ENCODE measurements at regions of chr16 and their contacts with region 1.

Region 1: GRCh38 chr16:22001591-22001990 is 675 bp upstream of the PDZD9 start:
- DNase-seq: no peak
- ATAC-seq: peak; percentile 53
- H3K4me3 ChIP-seq: no peak overlapping the region
- H3K27ac ChIP-seq: no peak overlapping the region
- H3K4me1 ChIP-seq: peaks cover 7% of the 10 kb centered on the region
- H3K27me3 ChIP-seq: no peaks in the 10 kb centered on the region
- CTCF ChIP-seq: no peak
- POLR2A ChIP-seq: no peak

Region 2: DNA sequence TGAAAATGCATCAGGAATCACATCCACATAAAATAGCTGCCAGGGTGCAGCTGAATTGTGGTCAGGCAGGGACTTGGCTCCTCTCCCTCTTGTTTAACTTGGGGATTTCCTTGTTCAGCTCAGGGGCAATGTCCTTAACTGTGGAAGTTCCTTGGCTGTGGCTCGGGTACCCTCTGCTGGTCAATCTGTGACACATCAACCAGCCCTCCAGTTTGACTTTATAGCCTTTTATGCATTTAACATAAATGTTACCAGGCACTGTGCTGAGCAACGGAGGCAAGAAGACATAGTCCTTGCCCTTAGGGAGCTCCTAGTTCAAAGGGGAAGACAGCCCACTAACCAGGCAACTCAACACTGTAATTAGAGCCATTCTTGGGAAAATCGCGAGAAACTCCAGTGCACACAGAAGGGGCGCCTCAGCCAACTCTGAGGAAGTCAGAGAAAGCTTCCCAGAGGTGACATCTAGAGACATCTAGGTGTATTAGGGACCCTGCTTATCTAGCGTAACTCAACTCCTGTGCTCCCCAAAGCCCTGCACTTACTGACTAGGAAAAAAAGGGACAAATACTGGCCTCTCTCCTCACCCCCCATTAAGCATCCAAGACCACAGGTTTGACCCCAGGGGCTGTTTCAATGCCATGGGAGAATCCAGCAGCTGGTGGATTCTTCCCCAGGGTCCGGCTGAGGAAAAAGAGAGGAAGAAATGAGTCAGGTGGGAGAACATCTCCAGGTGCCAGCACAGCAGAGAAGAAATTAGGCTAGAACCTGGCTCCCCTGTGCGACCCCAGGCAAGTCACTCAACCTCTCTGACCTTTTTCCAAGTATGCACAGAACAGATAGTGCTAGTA is 187.2 kb after region 1 on chr16:
- intact Hi-C with region 1: loop called (anchors 5 kb)
- DNase-seq: peak; percentile 76 to 91 (median 82)
- ATAC-seq: peak; percentile 16
- H3K4me3 ChIP-seq: no peak overlapping the region
- H3K27ac ChIP-seq: peak overlapping the region; percentile 17 to 98 (median 90)
- H3K4me1 ChIP-seq: peaks cover 32% of the 10 kb centered on the region
- H3K27me3 ChIP-seq: no peaks in the 10 kb centered on the region
- CTCF ChIP-seq: peak; percentile 74 to 96 (median 91)
- POLR2A ChIP-seq: no peak

Region 3: DNA sequence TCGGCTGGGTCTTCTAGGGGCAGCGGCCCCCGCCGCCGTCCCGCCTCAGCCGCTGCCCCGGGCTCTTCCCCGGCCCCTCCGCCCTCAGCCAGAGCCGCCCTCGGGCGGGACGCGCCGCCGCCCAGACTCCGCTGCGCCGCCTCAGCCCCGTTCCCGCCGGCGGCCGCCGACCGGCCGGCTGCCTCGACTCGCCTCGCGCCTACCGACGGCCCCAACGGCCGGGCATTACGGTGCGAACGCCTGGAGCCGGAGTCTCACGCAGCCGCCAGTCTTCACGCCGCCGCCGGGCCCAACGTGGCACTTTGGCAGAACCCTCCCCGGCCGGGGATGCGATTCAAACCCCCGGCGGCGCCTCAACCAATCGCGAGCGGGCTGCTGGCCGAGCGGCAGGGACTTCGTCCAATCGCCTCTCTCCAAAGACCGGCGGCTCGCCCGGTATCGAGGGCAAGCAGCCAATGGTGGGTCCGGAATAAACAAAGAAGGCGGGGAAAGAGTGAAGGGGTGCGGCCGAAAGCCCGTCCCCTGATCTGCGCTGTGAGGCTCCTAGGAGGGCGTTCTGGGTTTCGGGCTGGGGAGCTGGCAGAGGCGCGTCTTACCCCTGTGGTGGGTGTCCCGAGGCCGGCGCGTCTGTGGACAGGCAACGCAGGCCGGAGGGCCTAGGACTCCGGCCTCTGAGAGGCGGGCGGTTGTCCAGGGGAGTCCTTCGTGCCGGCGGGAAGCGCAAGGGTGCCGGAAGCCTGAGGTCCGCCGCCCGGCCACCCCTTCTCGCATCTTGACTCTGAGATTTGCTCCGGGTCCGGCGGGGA is 372.9 kb after region 1 on chr16 and contains the start of gene CDR2:
- intact Hi-C with region 1: no loop called
- DNase-seq: peak; percentile 98 to 99 (median 98)
- ATAC-seq: peak; percentile 96
- H3K4me3 ChIP-seq: peak within 1 kb of the TSS; percentile 60 to 92
- H3K27ac ChIP-seq: peak within 1 kb of the TSS; percentile 81 to 91 (median 84)
- H3K4me1 ChIP-seq: peaks cover 46% of the 10 kb centered on the region
- H3K27me3 ChIP-seq: no peaks in the 10 kb centered on the region
- CTCF ChIP-seq: no peak
- POLR2A ChIP-seq: peak; percentile 85 to 96 (median 89)
- total RNA-seq, gene CDR2: 15.8 to 16.8 TPM

Measured in body of pancreas (tissue), 4 donors.